ENCODE measurements at regions of chr1 and their contacts with region 1.

Region 1: DNA sequence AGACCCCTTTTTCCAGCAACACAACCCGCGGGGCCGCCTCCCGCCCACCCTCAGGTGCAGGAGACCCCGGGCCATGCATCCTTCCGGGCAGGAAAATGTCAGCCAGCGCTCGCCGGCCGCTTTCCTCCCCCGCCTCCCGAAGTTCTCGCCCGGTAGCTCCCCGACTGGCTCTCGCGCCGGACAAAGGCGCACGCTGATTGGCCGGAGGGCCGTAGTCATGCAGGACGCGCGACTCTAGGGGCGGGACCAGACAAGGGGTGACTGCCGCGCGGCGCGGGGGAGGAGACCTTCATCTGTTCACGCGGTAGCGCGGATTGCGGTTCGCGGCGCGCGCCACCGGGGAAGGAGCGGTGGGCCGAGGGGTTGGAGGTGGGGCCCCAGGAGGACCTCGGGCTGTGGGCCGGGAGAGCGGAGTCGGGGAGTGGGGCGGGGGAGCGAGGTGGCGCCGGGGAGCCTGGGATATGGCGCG is at the start of gene FLVCR1:
- DNase-seq: peak; percentile 100
- total RNA-seq, gene FLVCR1: 1.7 TPM

Region 2: GRCh38 chr1:212791676-212792395 is 66.2 kb before region 1 on chr1 and contains the starts of genes NSL1 and TATDN3:
- intact Hi-C with region 1: loop called (anchors 5 kb)
- DNase-seq: peak; percentile 96
- total RNA-seq, gene NSL1: 27.0 TPM
- total RNA-seq, gene TATDN3: 22.4 TPM